ENCODE measurements at regions of chr3 and their contacts with region 1.

Region 1: DNA sequence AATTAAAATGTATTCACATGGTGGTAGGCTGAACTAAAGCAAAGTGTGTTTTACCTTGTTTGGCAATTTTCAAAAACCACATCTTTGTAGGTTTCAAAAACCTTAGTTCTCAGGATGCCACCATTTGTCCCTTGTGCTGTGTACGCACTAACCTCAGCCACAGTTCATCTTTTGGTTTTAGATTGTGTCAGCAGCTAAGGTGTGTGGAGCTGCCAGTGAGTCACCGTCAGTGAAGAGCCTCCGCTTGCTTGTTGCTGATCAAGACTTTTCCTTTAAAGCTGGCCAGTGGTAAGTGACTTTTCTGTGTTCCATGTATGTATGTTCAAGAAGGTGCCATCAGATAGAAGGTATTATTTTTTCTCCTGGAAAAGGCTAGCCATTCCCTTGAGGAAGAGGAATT is 21.1 kb downstream of the OXNAD1 start:
- DNase-seq: no peak

Region 2: GRCh38 chr3:16550676-16551341 is 264.6 kb after region 1 on chr3:
- intact Hi-C with region 1: loop called (anchors 5 kb)
- DNase-seq: peak in 40 of 42 donors; percentile 14 to 89 (median 68)